ENCODE measurements at regions of chr19 and their contacts with region 1.

Region 1: DNA sequence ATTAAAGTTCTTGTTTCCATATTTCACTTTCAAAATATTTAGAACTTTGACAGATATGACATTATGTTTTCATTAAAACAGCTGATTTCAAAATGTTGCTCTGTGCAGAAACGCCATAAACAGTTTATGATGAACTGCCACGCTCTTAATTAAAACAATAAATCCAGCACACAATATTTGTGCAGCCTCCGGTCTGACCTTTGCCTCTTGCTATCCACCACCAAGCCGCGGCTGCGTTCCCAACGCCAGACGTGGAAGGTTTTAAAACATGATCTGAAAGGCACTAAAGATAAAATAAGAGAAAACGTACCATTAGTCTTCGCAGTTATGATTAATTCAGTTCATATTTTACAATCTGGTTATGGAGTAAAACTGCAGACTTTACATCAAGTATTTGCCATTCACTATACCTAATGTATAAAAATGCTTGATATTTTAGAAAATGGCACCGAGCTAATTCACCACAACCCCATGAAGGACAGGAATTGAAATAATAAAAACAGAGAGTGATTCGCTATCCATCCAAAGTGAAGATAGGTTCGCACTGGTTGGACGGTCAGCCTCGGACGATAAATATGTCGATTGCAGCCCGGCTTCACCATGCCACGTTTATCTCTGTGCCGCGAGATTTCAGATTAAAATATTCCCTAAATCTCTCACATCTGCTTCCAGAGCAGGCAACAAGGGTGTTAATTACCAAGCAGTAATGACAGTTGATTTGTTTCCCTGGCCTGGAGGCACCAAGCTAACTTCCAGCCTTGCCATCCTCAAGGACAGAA is 103.3 kb upstream of the ZNF507 start:
- DNase-seq: no peak
- ATAC-seq: no peak
- H3K4me3 ChIP-seq: no peak overlapping the region
- H3K4me3 Mint-ChIP-seq: no peak overlapping the region
- H3K27ac ChIP-seq: no peak overlapping the region
- H3K27ac Mint-ChIP-seq: no peak overlapping the region
- H3K4me1 ChIP-seq: no peaks in the 10 kb centered on the region
- H3K4me1 Mint-ChIP-seq: no peaks in the 10 kb centered on the region
- H3K27me3 ChIP-seq: peaks cover 0 to 13% of the 10 kb centered on the region in 2 experiments
- H3K27me3 Mint-ChIP-seq: peaks cover 4 to 9% of the 10 kb centered on the region in 2 donors

Region 2: DNA sequence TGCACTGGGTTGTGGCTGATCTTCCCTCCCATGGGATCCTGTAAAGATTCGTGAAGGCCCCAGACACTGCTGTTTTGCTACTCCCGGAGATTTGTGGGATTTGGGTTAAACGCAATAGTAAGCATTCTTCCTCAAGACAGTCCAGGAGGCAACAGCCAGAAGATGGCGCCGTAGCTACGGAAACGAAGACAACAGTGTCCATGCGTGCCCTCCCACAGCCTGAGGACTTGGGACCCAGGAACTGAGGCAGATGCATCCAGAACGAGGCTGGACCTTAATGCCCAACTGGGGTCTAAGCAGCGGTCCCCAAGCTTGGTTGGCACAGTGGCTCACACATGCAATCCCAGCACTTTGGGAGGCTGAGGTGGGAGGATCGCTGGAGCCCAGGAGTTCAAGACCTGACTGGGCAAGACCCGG is 45.7 kb after region 1 on chr19:
- CTCF ChIA-PET with region 1: no interaction called
- POLR2A ChIA-PET with region 1: no interaction called
- DNase-seq: peak in 1 of 35 experiments; percentile 9
- ATAC-seq: no peak
- H3K4me3 ChIP-seq: no peak overlapping the region
- H3K4me3 Mint-ChIP-seq: no peak overlapping the region
- H3K27ac ChIP-seq: no peak overlapping the region
- H3K27ac Mint-ChIP-seq: no peak overlapping the region
- H3K4me1 ChIP-seq: no peaks in the 10 kb centered on the region
- H3K4me1 Mint-ChIP-seq: no peaks in the 10 kb centered on the region
- H3K27me3 ChIP-seq: peaks cover 0 to 16% of the 10 kb centered on the region in 2 experiments
- H3K27me3 Mint-ChIP-seq: peaks cover 25 to 45% of the 10 kb centered on the region in 2 donors

Region 3: GRCh38 chr19:32543107-32543900 is 301.2 kb after region 1 on chr19:
- CTCF ChIA-PET with region 1: interaction called in 1 of 2 experiments, 10 read pairs
- POLR2A ChIA-PET with region 1: no interaction called
- DNase-seq: no peak
- ATAC-seq: no peak
- H3K4me3 ChIP-seq: no peak overlapping the region
- H3K4me3 Mint-ChIP-seq: no peak overlapping the region
- H3K27ac ChIP-seq: no peak overlapping the region
- H3K27ac Mint-ChIP-seq: no peak overlapping the region
- H3K4me1 ChIP-seq: no peaks in the 10 kb centered on the region
- H3K4me1 Mint-ChIP-seq: peaks cover 0 to under 1% (median 0%) of the 10 kb centered on the region in 3 donors
- H3K27me3 ChIP-seq: peaks cover 0 to 2% of the 10 kb centered on the region in 2 experiments
- H3K27me3 Mint-ChIP-seq: peaks cover 4 to 9% of the 10 kb centered on the region in 2 donors